ENCODE measurements at regions of chr18 and their contacts with region 1.

Region 1: DNA sequence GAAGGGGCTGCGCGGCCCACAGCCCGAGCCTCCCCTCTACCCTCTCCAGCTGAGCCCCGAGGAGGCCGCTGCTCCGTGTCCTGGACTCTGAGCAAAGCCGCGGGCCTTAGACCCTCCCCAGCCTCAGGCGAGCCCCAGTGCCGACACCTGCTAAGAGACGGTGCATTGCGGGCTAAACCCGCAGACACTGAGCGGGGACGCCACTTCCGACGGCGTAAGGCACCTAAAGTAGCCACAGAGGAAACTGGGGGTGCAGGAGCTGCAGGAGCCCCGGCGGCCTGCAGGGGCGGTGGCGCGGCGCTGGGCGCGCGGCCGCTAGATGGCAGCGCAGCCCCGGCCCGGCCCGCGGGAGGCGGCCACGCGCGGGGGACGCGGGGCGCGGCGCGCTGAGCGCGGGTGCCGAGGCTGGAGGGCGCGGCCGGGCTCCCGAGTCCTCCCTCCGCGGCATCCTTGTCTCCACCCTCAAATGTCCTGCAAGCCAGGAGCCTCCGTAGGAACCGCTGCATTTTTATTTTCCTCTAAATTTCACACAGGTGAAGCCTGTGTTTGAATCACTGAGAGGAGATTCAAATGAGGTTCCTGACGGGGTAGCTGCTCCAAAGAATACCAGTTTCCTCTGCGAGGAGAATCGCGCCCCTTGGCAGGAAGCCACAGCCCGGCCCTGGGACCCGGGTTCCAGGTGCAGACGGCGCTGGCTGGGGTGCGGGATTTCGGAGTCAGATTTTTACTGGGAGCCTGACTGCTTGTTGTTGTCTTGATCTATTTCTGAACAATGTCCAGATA is 650.5 kb downstream of the GALR1 start:
- DNase-seq: peak in 1 of 2 donors; percentile 34
- ATAC-seq: peak in 7 of 8 donors; percentile 48 to 96 (median 79)
- H3K4me3 ChIP-seq: peak overlapping the region in 9 of 10 donors; percentile 18 to 48 (median 38)
- H3K27ac ChIP-seq: no peak overlapping the region
- H3K4me1 ChIP-seq: peaks cover 0 to 9% (median 5%) of the 10 kb centered on the region in 9 donors
- H3K27me3 ChIP-seq: peaks cover 0 to 43% (median 30%) of the 10 kb centered on the region in 7 donors
- CTCF ChIP-seq: peak; percentile 57 to 80 (median 67)

Region 2: GRCh38 chr18:78984941-78985784 is 1085.0 kb after region 1 on chr18:
- intact Hi-C with region 1: loop called in 1 of 10 experiments (anchors 5 kb)
- DNase-seq: no peak
- ATAC-seq: peak in 2 of 8 donors; percentile 9 to 20
- H3K4me3 ChIP-seq: no peak overlapping the region
- H3K27ac ChIP-seq: no peak overlapping the region
- H3K4me1 ChIP-seq: peaks cover 0 to 16% (median 10%) of the 10 kb centered on the region in 9 donors
- H3K27me3 ChIP-seq: peaks cover 35 to 100% (median 96%) of the 10 kb centered on the region in 7 donors
- CTCF ChIP-seq: peak in 3 of 9 donors; percentile 4 to 13 (median 9)

Region 3: GRCh38 chr18:79258447-79258846 is 1358.3 kb after region 1 on chr18:
- intact Hi-C with region 1: loop called in 1 of 10 experiments (anchors 10 kb)
- DNase-seq: no peak
- ATAC-seq: peak in 1 of 8 donors; percentile 65
- H3K4me3 ChIP-seq: no peak overlapping the region
- H3K27ac ChIP-seq: no peak overlapping the region
- H3K4me1 ChIP-seq: no peaks in the 10 kb centered on the region
- H3K27me3 ChIP-seq: no peaks in the 10 kb centered on the region
- CTCF ChIP-seq: no peak